Activated B cell treated with CpG ODN at 0.5 μM for 24 hours (primary cell): ENCODE measurements at regions of chr12 and their contacts with region 1.

Region 1: GRCh38 chr12:53321074-53321814 is at the start of gene AAAS:
- DNase-seq: peak; percentile 93
- ATAC-seq: peak; percentile 84
- H3K4me3 Mint-ChIP-seq: peak within 1 kb of the TSS; percentile 95
- H3K27ac Mint-ChIP-seq: peak within 1 kb of the TSS; percentile 95
- H3K4me1 Mint-ChIP-seq: peaks cover 36% of the 10 kb centered on the region
- H3K27me3 Mint-ChIP-seq: no peaks in the 10 kb centered on the region
- CTCF ChIP-seq: peak; percentile 57
- total RNA-seq, gene AAAS: 57.3 and 72.1 TPM in 2 replicates

Region 2: DNA sequence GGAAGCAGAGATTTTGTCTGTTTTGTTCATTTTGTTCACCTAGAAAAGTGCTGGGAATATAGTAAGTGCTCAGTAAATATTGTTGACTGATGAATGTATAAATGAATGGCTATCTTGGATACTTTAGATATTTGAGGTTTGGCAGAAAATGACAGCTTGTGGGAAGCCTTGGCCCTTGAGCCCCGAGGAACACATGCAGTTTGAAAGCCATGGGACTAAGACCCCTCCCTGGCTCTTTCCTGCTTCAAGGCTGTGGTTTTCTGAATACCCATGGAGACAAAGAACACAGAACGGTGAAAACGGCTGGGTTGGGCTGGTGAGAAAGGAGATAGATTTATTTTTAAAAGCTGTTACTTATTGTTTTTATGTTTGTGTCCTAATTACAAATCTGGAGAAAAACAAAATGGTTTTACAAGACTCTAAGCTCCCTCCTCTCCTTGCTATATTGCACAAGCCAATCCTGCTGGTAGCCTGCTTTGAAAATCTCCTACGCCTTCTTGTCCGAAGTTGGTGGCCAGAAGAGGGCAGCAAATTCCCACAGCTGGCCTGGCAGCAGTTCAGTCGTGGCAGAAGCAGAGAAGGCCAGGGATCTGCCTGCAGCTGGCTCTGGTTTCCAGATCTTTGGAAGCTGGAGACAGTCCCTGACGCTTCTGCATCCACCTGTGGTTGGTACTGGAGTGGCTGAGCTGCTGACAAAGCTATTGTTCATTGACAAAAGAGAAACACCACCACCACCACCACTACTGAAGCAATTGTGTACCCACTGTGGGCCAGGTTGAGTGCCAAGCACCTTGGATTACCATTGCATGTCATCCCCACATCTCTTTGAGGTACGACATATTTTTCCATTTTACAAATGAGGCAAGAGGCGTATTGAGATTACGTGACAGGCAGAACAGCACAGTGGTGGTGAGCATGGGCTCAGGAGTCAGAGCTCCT is 948.8 kb before region 1 on chr12:
- CTCF ChIA-PET with region 1: no interaction called
- POLR2A ChIA-PET with region 1: no interaction called
- intact Hi-C with region 1: no loop called
- DNase-seq: no peak
- ATAC-seq: peak; percentile 25
- H3K4me3 Mint-ChIP-seq: no peak overlapping the region
- H3K27ac Mint-ChIP-seq: no peak overlapping the region
- H3K4me1 Mint-ChIP-seq: no peaks in the 10 kb centered on the region
- H3K27me3 Mint-ChIP-seq: peaks cover 23% of the 10 kb centered on the region
- CTCF ChIP-seq: no peak

Region 3: GRCh38 chr12:53159195-53159839 is 161.9 kb before region 1 on chr12:
- CTCF ChIA-PET with region 1: interaction called, 13 read pairs
- POLR2A ChIA-PET with region 1: interaction called, 10 read pairs
- intact Hi-C with region 1: loop called (anchors 1 kb)
- DNase-seq: peak; percentile 78
- ATAC-seq: peak; percentile 100
- H3K4me3 Mint-ChIP-seq: no peak overlapping the region
- H3K27ac Mint-ChIP-seq: no peak overlapping the region
- H3K4me1 Mint-ChIP-seq: peaks cover 5% of the 10 kb centered on the region
- H3K27me3 Mint-ChIP-seq: no peaks in the 10 kb centered on the region
- CTCF ChIP-seq: peak; percentile 13

Region 4: GRCh38 chr12:53220801-53221202 is 100.4 kb before region 1 on chr12:
- CTCF ChIA-PET with region 1: interaction called, 61 read pairs
- POLR2A ChIA-PET with region 1: interaction called, 11 read pairs
- intact Hi-C with region 1: loop called (anchors 1 kb)
- DNase-seq: peak; percentile 74
- ATAC-seq: peak; percentile 77
- H3K4me3 Mint-ChIP-seq: peak overlapping the region; percentile 89
- H3K27ac Mint-ChIP-seq: peak overlapping the region; percentile 96
- H3K4me1 Mint-ChIP-seq: peaks cover 48% of the 10 kb centered on the region
- H3K27me3 Mint-ChIP-seq: no peaks in the 10 kb centered on the region
- CTCF ChIP-seq: no peak

Region 5: GRCh38 chr12:53295070-53295890 is 26.0 kb before region 1 on chr12 and contains the start of gene PFDN5:
- CTCF ChIA-PET with region 1: interaction called, 37 read pairs
- POLR2A ChIA-PET with region 1: interaction called, 114 read pairs
- intact Hi-C with region 1: loop called (anchors 1 kb)
- DNase-seq: peak; percentile 75
- ATAC-seq: peak; percentile 89
- H3K4me3 Mint-ChIP-seq: peak within 1 kb of the TSS; percentile 99
- H3K27ac Mint-ChIP-seq: peak within 1 kb of the TSS; percentile 97
- H3K4me1 Mint-ChIP-seq: peaks cover 48% of the 10 kb centered on the region
- H3K27me3 Mint-ChIP-seq: no peaks in the 10 kb centered on the region
- CTCF ChIP-seq: no peak
- total RNA-seq, gene PFDN5: 486 and 578 TPM in 2 replicates

Region 6: GRCh38 chr12:53379389-53380103 is 58.3 kb after region 1 on chr12:
- CTCF ChIA-PET with region 1: interaction called, 7 read pairs
- POLR2A ChIA-PET with region 1: interaction called, 19 read pairs
- intact Hi-C with region 1: loop called (anchors 1 kb)
- DNase-seq: peak; percentile 70
- ATAC-seq: peak; percentile 72
- H3K4me3 Mint-ChIP-seq: no peak overlapping the region
- H3K27ac Mint-ChIP-seq: no peak overlapping the region
- H3K4me1 Mint-ChIP-seq: peaks cover 37% of the 10 kb centered on the region
- H3K27me3 Mint-ChIP-seq: no peaks in the 10 kb centered on the region
- CTCF ChIP-seq: no peak

Region 7: DNA sequence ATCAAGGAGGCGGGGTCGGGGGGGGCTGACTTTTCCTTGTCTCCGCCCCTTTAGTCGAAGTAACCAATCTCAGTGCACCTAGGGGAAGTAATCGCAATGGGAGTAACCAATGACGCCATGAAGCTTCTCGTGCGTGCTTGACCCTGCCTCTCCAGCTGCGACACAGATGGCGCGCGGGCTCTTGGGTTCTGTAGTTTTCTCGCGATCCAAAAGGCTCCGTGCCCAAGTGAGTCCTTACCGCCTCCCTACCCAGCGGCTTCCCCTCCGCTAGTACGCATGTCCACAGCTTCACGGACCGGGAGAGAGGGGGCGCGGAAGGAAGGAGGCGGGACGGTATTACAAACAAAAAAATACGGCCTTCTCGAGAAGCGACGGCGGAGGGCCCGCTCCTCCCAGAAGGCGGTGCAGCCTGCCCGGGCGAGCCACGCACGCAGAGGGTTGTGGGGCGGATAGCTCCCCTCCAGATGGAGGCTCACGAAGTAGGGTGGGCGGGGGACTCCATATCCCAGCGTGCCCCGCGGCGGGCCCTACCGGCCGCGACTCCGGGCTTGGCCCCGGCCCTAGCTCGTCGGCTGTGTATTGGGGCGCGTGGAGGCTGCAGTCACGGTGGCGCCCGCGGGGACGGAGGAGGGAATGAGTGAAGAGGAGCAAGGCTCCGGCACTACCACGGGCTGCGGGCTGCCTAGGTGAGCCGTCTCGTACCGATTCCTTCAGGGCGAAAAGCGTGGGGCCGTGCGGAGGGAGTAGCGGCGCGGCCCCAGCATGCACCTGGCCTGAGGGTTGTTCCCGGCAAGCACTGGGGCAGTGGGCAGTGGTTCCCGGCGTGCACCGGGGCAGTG is 179.8 kb after region 1 on chr12 and contains the start of gene TARBP2:
- CTCF ChIA-PET with region 1: interaction called, 7 read pairs
- POLR2A ChIA-PET with region 1: interaction called, 20 read pairs
- intact Hi-C with region 1: loop called (anchors 1 kb)
- DNase-seq: peak; percentile 94
- ATAC-seq: peak; percentile 81
- H3K4me3 Mint-ChIP-seq: peak within 1 kb of the TSS; percentile 92
- H3K27ac Mint-ChIP-seq: peak within 1 kb of the TSS; percentile 96
- H3K4me1 Mint-ChIP-seq: peaks cover 36% of the 10 kb centered on the region
- H3K27me3 Mint-ChIP-seq: no peaks in the 10 kb centered on the region
- CTCF ChIP-seq: no peak
- total RNA-seq, gene TARBP2: 45.7 and 49.6 TPM in 2 replicates

Region 8: DNA sequence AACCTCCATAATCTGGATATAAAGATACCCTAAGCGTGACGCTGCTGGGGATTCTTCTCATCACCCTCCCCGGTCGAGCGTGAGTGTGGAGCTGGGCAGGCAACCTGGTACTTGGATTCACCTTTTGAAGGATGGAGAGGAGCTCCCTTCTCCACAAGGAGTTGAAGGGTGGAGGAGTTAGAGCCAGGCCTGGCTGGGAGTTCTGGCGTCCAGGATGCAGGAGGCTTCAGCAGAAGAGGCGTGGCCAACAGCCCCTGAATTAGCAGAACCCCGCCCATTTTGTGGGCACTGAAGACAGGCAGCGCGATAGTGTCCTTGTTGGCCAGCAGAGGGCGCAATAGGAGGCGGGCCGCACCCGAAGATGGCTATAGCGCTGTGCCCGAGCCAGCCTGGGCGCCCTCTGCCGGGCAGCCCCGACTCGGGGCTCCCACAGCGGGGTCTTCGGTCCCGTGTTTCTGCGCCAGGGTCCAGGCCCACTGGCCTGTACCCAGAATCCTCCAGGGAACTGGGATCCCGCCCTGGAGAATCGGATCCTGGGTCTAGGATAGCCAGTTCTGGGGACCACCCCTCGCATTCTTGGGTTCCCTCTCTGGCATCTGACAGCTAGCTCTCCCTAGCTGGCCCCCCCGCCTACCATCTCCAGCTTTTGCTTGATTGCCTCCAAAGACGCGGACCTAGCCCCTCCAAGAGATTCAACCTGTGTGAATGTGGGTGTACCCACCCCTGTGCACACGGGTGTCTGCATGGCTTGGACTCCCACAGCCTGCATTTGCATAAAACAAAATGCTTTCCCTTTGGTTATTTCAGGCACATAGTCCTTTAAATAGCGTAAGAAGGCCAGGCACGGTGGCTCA is 893.5 kb after region 1 on chr12:
- CTCF ChIA-PET with region 1: no interaction called
- POLR2A ChIA-PET with region 1: no interaction called
- intact Hi-C with region 1: loop called (anchors 10 kb)
- DNase-seq: peak; percentile 87
- ATAC-seq: peak; percentile 85
- H3K4me3 Mint-ChIP-seq: peak overlapping the region; percentile 83
- H3K27ac Mint-ChIP-seq: no peak overlapping the region
- H3K4me1 Mint-ChIP-seq: peaks cover 45% of the 10 kb centered on the region
- H3K27me3 Mint-ChIP-seq: peaks cover 5% of the 10 kb centered on the region
- CTCF ChIP-seq: peak; percentile 97